Panc1 (cell line): ENCODE measurements at regions of chr17 and their contacts with region 1.

Region 1: GRCh38 chr17:65008882-65009281 is 47.7 kb downstream of the GNA13 start:
- DNase-seq: no peak
- ATAC-seq: no peak
- H3K4me3 ChIP-seq: no peak overlapping the region
- H3K27ac ChIP-seq: no peak overlapping the region
- H3K4me1 ChIP-seq: no peaks in the 10 kb centered on the region
- H3K27me3 ChIP-seq: no peaks in the 10 kb centered on the region
- CTCF ChIP-seq: no peak

Region 2: GRCh38 chr17:65147955-65148354 is 139.1 kb after region 1 on chr17:
- CTCF ChIA-PET with region 1: no interaction called
- POLR2A ChIA-PET with region 1: interaction called, 11 read pairs
- in situ Hi-C with region 1: no loop called
- intact Hi-C with region 1: no loop called
- DNase-seq: no peak
- ATAC-seq: no peak
- H3K4me3 ChIP-seq: no peak overlapping the region
- H3K27ac ChIP-seq: no peak overlapping the region
- H3K4me1 ChIP-seq: no peaks in the 10 kb centered on the region
- H3K27me3 ChIP-seq: no peaks in the 10 kb centered on the region
- CTCF ChIP-seq: no peak